OCI-LY7 (cell line): ENCODE measurements at regions of chr10 and their contacts with region 1.

Region 1: GRCh38 chr10:22363305-22363704 is 18.0 kb downstream of the SPAG6 start:
- DNase-seq: no peak
- H3K4me3 ChIP-seq: no peak overlapping the region
- H3K27ac ChIP-seq: no peak overlapping the region
- H3K4me1 ChIP-seq: no peaks in the 10 kb centered on the region
- CTCF ChIP-seq: no peak

Region 2: DNA sequence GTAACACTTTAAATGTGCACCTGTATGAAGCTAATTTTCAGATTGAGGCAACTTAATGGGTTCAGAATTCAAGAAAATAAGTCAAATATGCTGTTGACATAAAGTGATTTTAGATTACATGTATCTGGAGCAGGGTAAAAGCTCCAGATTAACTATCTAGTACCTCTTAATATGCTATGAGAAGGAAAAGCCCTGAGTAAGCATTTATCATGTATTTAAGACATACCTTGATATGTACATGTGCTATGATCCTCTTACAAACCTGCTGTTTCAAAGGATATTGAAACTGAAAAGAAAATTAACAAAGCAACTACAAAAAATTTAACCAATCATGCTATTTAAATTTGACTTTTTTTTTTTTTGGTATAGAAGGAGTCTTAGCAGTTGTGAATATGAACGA is 13.5 kb before region 1 on chr10:
- CTCF ChIA-PET with region 1: no interaction called
- POLR2A ChIA-PET with region 1: interaction called, 11 read pairs
- intact Hi-C with region 1: no loop called
- DNase-seq: no peak
- H3K4me3 ChIP-seq: no peak overlapping the region
- H3K27ac ChIP-seq: no peak overlapping the region
- H3K4me1 ChIP-seq: no peaks in the 10 kb centered on the region
- CTCF ChIP-seq: no peak

Region 3: GRCh38 chr10:22436884-22437619 is 73.7 kb after region 1 on chr10:
- CTCF ChIA-PET with region 1: no interaction called
- POLR2A ChIA-PET with region 1: no interaction called
- intact Hi-C with region 1: no loop called
- DNase-seq: peak; percentile 32
- H3K4me3 ChIP-seq: peak overlapping the region; percentile 66
- H3K27ac ChIP-seq: no peak overlapping the region
- H3K4me1 ChIP-seq: no peaks in the 10 kb centered on the region
- CTCF ChIP-seq: no peak

Region 4: GRCh38 chr10:22560913-22561239 is 197.6 kb after region 1 on chr10:
- CTCF ChIA-PET with region 1: no interaction called
- POLR2A ChIA-PET with region 1: no interaction called
- intact Hi-C with region 1: no loop called
- DNase-seq: no peak
- H3K4me3 ChIP-seq: no peak overlapping the region
- H3K27ac ChIP-seq: no peak overlapping the region
- H3K4me1 ChIP-seq: no peaks in the 10 kb centered on the region
- CTCF ChIP-seq: no peak

Region 5: DNA sequence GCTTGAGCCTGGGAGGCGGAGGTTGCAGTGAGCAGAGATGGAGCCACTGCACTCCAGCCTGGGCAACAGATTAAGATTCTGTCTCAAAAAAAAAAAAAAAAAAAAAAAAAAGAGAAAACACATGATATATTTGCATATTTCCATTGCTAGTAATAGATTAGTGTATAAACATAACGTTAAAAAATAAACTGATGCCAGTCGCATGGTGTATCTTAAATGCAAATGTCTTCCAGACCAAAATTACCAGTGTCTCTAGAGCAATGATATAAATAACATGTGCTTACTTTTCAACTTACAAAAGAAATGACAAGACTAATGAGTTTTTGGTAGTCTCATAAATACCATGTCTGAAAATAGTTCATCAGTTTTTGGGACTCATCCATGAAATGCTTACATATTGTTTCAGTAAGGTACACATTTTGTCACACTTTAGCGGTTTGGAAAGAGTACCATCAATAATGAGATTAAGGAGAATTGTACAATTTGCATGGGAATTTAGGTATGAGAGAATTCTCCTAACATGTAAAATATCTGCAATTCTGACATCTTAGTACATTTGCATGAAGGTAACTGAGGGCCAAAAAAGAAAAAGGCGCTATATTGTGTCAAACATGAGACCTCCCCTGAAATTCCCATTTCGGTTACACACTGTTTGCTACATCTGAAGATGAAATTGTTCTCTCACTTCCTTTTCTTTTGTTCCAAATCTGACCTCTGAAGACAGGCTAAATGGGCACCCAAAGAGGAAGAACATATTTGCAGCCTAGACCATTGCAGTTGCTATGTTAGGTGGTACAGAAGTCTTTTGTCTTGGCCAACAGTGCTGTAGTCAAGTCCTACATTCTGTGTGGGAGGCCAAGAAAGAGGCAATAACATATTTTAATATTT is 402.6 kb after region 1 on chr10:
- CTCF ChIA-PET with region 1: no interaction called
- POLR2A ChIA-PET with region 1: no interaction called
- intact Hi-C with region 1: no loop called
- DNase-seq: peak; percentile 76
- H3K4me3 ChIP-seq: peak overlapping the region; percentile 31
- H3K27ac ChIP-seq: peak overlapping the region; percentile 68
- H3K4me1 ChIP-seq: peaks cover 27% of the 10 kb centered on the region
- CTCF ChIP-seq: no peak